ENCODE measurements at regions of chr5 and their contacts with region 1.

Region 1: DNA sequence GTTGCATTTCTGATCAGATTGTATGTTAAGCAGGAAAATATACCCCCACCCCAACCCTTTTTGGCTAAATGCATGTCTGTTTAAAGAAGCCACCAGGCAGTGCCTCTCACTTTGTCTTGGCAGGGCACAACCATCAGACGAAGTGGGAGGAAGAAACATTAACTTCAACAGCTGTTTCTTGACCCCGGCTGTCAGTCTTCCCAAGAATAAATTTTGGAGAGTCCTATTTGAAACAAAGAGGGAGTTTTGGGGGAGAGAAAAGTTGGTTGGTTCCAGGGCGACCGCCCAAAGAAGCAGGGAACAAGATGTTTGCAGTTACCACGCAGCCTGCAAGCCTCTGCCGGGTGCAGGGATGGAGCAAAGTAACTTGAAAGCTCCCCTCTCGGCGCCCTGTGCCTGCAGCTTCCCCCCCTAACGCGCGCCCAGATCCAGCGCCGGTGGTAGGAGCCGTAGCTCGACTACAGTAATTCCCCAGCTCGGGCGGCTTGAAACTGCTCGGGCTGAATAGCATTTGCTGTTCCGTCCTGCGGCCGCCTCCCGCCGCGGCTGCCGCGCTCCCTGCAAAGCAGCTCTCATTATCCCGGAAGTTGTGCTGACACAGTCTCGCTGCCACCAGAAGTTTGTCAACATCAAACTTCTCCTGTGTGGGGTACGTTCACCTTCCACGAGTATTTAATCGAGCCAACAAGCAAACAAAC is 100.7 kb upstream of the SSBP2 start:
- DNase-seq: peak; percentile 92
- ATAC-seq: peak; percentile 89
- H3K4me3 Mint-ChIP-seq: peak overlapping the region; percentile 83
- H3K27ac Mint-ChIP-seq: peak overlapping the region; percentile 96
- H3K4me1 Mint-ChIP-seq: peaks cover 40% of the 10 kb centered on the region
- H3K27me3 Mint-ChIP-seq: no peaks in the 10 kb centered on the region
- CTCF ChIP-seq: no peak

Region 2: DNA sequence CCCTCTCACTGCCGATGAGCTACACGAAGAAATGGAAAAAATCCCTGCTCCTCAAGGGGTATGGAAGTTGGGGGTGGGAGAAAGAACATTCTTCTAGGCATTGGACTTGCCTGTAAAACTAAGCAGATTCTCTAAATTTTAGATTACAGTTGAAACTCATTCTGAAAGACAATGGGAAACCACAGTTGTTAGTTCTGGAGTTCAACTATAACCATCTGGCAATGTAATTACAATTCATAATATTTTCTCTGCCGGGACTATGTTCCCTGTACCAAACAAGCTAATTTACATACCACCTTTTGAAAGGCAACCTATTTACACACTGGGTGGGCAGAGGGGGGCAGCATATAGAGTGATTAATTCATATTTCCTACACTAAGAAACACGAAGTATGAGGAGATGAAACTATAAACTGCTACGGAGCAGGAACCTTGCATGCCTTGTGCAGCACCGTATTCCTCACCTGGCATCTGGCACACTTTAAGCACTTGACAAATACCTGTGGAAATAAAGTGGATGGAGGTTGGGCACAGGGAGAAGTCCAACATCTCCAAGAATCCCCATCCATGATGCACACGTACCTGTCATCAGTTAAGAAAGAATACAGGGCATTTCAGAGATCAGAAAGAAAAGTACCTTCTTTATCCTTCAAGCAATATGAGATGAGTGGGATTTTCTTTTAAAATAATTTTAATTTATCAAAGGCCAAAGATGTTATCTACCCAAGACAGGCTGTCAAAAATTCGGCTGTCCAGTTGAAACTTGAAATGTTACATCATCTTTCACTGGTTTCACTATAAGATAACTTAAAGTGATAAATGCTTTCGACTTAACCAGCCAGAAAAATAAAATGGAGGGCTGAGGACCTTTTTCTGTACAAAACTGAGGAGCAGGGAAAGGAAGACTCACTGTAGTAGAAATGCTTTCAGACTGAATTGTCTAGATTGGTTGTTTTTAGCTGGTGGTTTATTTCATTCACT is 154.9 kb before region 1 on chr5:
- CTCF ChIA-PET with region 1: no interaction called
- POLR2A ChIA-PET with region 1: no interaction called
- intact Hi-C with region 1: no loop called
- DNase-seq: no peak
- ATAC-seq: no peak
- H3K4me3 Mint-ChIP-seq: no peak overlapping the region
- H3K27ac Mint-ChIP-seq: no peak overlapping the region
- H3K4me1 Mint-ChIP-seq: no peaks in the 10 kb centered on the region
- H3K27me3 Mint-ChIP-seq: no peaks in the 10 kb centered on the region
- CTCF ChIP-seq: no peak

Region 3: GRCh38 chr5:81751009-81751835 is 100.4 kb before region 1 on chr5 and contains the start of gene SSBP2:
- CTCF ChIA-PET with region 1: interaction called, 25 read pairs
- POLR2A ChIA-PET with region 1: interaction called, 42 read pairs
- intact Hi-C with region 1: loop called (anchors 1 kb)
- DNase-seq: peak; percentile 95
- ATAC-seq: peak; percentile 93
- H3K4me3 Mint-ChIP-seq: peak within 1 kb of the TSS; percentile 87
- H3K27ac Mint-ChIP-seq: peak within 1 kb of the TSS; percentile 85
- H3K4me1 Mint-ChIP-seq: peaks cover 26% of the 10 kb centered on the region
- H3K27me3 Mint-ChIP-seq: peaks cover 3% of the 10 kb centered on the region
- CTCF ChIP-seq: no peak
- total RNA-seq, gene SSBP2: 11.7 to 12.9 TPM

Region 4: DNA sequence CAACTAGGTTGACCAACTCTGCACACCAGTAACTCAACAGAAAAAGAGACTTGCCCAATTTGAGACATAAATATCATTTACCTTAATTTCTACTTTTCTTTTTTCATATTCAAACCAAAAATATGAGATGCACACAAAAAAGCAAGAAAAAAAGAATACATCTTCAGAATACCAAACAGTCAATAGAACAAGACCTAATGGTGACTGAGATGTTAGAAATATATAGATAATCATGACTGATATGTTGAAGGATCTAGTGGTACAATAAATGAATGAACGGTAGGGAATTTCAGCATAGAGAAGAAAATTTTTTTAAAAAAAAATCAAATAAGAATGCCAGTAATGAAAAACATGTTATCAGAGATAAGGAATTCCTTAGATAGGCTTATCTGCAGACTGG is 91.1 kb after region 1 on chr5:
- CTCF ChIA-PET with region 1: no interaction called
- POLR2A ChIA-PET with region 1: no interaction called
- intact Hi-C with region 1: no loop called
- DNase-seq: no peak
- ATAC-seq: no peak
- H3K4me3 Mint-ChIP-seq: no peak overlapping the region
- H3K27ac Mint-ChIP-seq: no peak overlapping the region
- H3K4me1 Mint-ChIP-seq: no peaks in the 10 kb centered on the region
- H3K27me3 Mint-ChIP-seq: no peaks in the 10 kb centered on the region
- CTCF ChIP-seq: no peak

Region 5: GRCh38 chr5:81971712-81972495 is 120.3 kb after region 1 on chr5 and contains the start of gene ATG10:
- CTCF ChIA-PET with region 1: interaction called, 3 read pairs
- POLR2A ChIA-PET with region 1: interaction called, 3 read pairs
- intact Hi-C with region 1: loop called (anchors 5 kb)
- DNase-seq: peak; percentile 89
- ATAC-seq: peak; percentile 95
- H3K4me3 Mint-ChIP-seq: peak within 1 kb of the TSS; percentile 90
- H3K27ac Mint-ChIP-seq: peak within 1 kb of the TSS; percentile 95
- H3K4me1 Mint-ChIP-seq: peaks cover 23% of the 10 kb centered on the region
- H3K27me3 Mint-ChIP-seq: no peaks in the 10 kb centered on the region
- CTCF ChIP-seq: no peak
- total RNA-seq, gene ATG10: 7.5 to 12.0 TPM

Measured in activated CD8-positive, alpha-beta T cell treated with anti-CD3 and anti-CD28 coated beads for 36 hours (primary cell).